Posterior cingulate gyrus (tissue), 11 donors: ENCODE measurements at regions of chr2 and their contacts with region 1.

Region 1: GRCh38 chr2:73233154-73233931 is at the start of gene PRADC1:
- DNase-seq: peak; percentile 98 to 100 (median 100)

Region 2: GRCh38 chr2:73214120-73215035 is 19.0 kb before region 1 on chr2 and contains the start of gene SMYD5:
- intact Hi-C with region 1: loop called (anchors 2 kb)
- DNase-seq: peak; percentile 73 to 97 (median 82)

Region 3: GRCh38 chr2:73385595-73386341 is 152.4 kb after region 1 on chr2 and contains the start of gene ALMS1:
- intact Hi-C with region 1: loop called (anchors 5 kb)
- DNase-seq: peak; percentile 71 to 97 (median 83)

Region 4: GRCh38 chr2:73736855-73737779 is 503.8 kb after region 1 on chr2 and contains the start of gene TPRKB:
- intact Hi-C with region 1: loop called (anchors 10 kb)
- DNase-seq: peak; percentile 93 to 99 (median 96)